Endothelial cell of umbilical vein (primary cell): ENCODE measurements at regions of chr20 and their contacts with region 1.

Region 1: DNA sequence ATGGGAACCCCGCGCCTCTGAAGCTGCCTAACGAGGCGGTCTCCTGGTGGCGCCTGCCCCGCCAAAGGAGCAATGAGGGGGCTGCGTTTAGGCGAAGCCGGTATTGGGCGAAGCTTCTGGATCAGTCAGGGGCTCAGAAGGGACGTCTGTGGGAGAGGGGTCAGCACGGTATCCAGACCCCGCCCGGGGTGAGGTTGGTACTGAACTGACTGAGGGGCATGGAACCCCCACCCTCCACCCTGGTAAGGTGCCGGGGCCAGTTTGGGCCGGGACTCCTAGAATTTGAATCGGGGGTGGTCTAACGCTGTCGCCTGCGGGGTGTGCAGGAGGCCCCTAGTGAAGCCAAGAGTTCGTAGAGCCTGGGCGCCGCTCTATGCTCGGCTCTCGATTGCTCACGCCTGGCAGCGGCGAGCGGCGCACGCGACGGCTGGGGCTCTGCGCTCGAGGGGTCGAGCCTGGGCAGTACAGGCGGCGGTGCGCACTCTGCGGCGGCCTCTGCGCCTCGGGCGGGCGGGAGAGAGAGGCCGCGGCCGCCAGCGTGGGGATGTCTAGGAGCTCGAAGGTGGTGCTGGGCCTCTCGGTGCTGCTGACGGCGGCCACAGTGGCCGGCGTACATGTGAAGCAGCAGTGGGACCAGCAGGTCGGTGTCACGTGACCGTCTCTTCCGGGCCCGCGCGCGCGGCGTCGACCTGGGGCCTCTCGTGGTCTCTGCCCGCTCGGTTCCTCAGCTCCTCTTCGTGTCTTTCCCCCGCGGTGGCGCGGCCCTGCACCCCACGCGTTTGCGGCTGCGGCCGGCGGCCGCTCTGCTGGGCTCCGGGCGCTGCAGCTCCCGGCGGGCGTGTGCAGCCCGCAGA is at the starts of genes KAT14 and PET117:
- DNase-seq: peak; percentile 93
- H3K4me3 ChIP-seq: peak within 1 kb of the TSS; percentile 73 to 86 (median 81)
- H3K27ac ChIP-seq: peak within 1 kb of the TSS; percentile 60
- H3K4me1 ChIP-seq: peaks cover 11% of the 10 kb centered on the region
- H3K27me3 ChIP-seq: peaks cover 3 to 7% of the 10 kb centered on the region in 2 experiments
- CTCF ChIP-seq: no peak
- POLR2A ChIP-seq: peak; percentile 90
- total RNA-seq, gene KAT14: 9.5 and 11.7 TPM in 2 replicates
- total RNA-seq, gene PET117: 11.4 and 12.9 TPM in 2 replicates

Region 2: DNA sequence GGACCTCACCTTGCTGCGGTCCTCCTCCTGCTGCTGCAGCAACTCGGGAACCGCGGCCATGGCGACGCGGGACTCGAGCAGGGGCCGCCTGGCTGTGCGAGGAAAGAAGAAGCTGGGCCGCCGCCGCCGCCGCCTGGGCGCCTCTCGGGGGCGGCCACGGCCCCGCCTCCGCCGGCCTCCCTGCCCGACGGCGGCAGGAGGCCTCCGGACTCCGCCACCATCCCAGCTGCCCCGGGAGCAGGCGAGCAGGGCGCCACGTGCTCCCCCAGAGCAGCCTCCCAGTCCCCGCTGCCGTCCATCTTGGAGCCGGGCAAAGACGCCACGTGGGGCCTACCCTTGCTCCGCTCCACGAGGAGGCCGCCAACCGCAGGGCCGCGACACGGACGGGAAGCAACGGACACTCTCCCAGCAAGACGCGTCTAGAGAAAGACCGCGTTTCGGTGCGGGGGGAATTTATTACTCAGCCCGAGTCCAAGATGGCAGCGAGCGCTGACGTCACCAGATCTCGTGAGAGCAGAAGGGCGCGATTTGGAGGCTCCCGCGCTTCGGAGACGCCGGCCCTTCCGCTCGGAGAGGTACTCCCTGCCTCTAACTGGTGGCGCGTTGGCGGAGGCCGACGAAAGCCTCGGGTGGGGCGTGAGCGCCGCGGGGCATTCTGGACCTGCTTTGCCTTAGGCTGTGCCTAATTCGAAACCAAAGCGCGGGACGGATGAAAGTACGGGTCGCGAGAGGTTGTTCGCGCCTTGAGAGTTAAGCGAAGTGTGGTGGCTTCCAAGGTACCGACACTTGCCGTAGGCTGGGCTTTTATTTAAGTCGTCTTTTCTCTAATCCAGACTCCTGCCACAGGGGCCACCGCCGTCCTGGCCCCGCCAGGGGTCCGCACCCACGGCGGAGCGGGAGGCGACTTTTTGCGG is 169.0 kb before region 1 on chr20 and contains the starts of genes MGME1 and SNX5:
- CTCF ChIA-PET with region 1: no interaction called
- POLR2A ChIA-PET with region 1: no interaction called
- dilution Hi-C with region 1: no loop called
- intact Hi-C with region 1: loop called (anchors 10 kb)
- DNase-seq: peak; percentile 100
- H3K4me3 ChIP-seq: peak within 1 kb of the TSS; percentile 76 to 97 (median 97)
- H3K27ac ChIP-seq: peak within 1 kb of the TSS; percentile 92
- H3K4me1 ChIP-seq: peaks cover 62% of the 10 kb centered on the region
- H3K27me3 ChIP-seq: no peaks in the 10 kb centered on the region
- CTCF ChIP-seq: no peak
- POLR2A ChIP-seq: peak; percentile 92
- total RNA-seq, gene MGME1: 18.0 and 26.2 TPM in 2 replicates
- total RNA-seq, gene SNX5: 109 and 121 TPM in 2 replicates

Region 3: GRCh38 chr20:18224968-18225568 is 87.4 kb after region 1 on chr20:
- CTCF ChIA-PET with region 1: no interaction called
- POLR2A ChIA-PET with region 1: interaction called, 5 read pairs
- dilution Hi-C with region 1: no loop called
- intact Hi-C with region 1: loop called (anchors 5 kb)
- DNase-seq: peak; percentile 83
- H3K4me3 ChIP-seq: no peak overlapping the region
- H3K27ac ChIP-seq: no peak overlapping the region
- H3K4me1 ChIP-seq: peaks cover 14% of the 10 kb centered on the region
- H3K27me3 ChIP-seq: no peaks in the 10 kb centered on the region
- CTCF ChIP-seq: no peak
- POLR2A ChIP-seq: no peak

Region 4: DNA sequence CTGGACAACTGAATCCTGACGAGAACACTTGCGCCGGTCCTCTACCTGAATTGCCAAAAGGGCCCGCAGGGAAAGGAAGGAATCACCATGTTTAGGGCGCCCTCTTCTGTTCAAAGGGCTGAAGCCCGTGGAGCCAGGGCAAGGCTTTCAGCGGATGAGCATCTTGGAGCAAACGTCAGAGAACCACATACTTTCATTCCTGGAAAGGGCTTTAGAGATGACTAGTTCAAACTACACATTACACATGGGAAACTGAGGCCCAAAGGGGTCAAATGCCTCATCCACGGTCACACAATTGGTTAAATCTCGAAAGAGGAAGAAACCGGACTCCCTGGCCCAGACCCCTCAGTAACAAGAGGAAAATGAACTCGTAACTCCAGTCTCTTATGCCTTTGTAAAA is 139.2 kb after region 1 on chr20:
- CTCF ChIA-PET with region 1: interaction called, 3 read pairs
- POLR2A ChIA-PET with region 1: no interaction called
- dilution Hi-C with region 1: no loop called
- intact Hi-C with region 1: loop called (anchors 2 kb)
- DNase-seq: peak; percentile 59
- H3K4me3 ChIP-seq: no peak overlapping the region
- H3K27ac ChIP-seq: no peak overlapping the region
- H3K4me1 ChIP-seq: no peaks in the 10 kb centered on the region
- H3K27me3 ChIP-seq: peaks cover 13 to 17% of the 10 kb centered on the region in 2 experiments
- CTCF ChIP-seq: peak; percentile 86 to 89
- POLR2A ChIP-seq: no peak

Region 5: DNA sequence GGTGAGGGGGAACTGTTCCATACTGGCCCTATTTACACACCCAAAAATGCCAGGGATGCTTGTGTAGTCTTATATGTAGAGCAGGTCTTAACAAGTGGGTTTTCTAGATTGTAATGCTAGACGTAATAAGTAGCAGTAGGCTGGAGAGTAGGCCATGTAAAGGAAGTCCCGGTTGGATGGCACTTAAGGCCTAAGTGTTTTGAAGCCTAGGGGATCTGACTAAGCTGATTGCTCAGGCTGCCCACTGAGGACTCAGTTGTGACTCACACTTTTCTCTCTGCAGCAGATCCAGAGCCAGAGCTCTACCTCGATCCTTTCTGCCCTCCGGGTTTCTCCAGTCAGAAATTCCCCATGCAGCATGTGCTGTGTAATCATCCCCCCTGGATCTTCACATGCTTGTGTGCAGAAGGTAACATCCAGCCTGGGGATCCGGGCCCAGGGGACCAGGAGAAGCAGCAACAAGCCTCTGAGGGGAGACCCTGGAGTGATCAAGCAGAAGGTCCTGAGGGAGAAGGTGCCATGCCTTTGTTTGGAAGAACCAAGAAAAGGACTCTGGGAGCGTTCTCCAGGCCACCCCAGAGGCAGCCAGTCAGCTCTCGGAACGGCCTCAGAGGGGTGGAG is 177.3 kb after region 1 on chr20:
- CTCF ChIA-PET with region 1: no interaction called
- POLR2A ChIA-PET with region 1: no interaction called
- dilution Hi-C with region 1: no loop called
- intact Hi-C with region 1: no loop called
- DNase-seq: no peak
- H3K4me3 ChIP-seq: no peak overlapping the region
- H3K27ac ChIP-seq: no peak overlapping the region
- H3K4me1 ChIP-seq: no peaks in the 10 kb centered on the region
- H3K27me3 ChIP-seq: no peaks in the 10 kb centered on the region
- CTCF ChIP-seq: no peak
- POLR2A ChIP-seq: no peak

Region 6: GRCh38 chr20:18466894-18467730 is 329.5 kb after region 1 on chr20 and contains the starts of genes DZANK1 and POLR3F:
- CTCF ChIA-PET with region 1: no interaction called
- POLR2A ChIA-PET with region 1: no interaction called
- dilution Hi-C with region 1: no loop called
- intact Hi-C with region 1: loop called (anchors 5 kb)
- DNase-seq: peak; percentile 96
- H3K4me3 ChIP-seq: peak within 1 kb of the TSS; percentile 72 to 99 (median 99)
- H3K27ac ChIP-seq: peak within 1 kb of the TSS; percentile 93
- H3K4me1 ChIP-seq: peaks cover 13% of the 10 kb centered on the region
- H3K27me3 ChIP-seq: no peaks in the 10 kb centered on the region
- CTCF ChIP-seq: no peak
- POLR2A ChIP-seq: peak; percentile 34
- total RNA-seq, gene DZANK1: 1.8 and 3.0 TPM in 2 replicates
- total RNA-seq, gene POLR3F: 9.8 and 10.2 TPM in 2 replicates

Region 7: GRCh38 chr20:18587665-18588573 is 450.3 kb after region 1 on chr20 and contains the start of gene DTD1:
- CTCF ChIA-PET with region 1: no interaction called
- POLR2A ChIA-PET with region 1: no interaction called
- dilution Hi-C with region 1: no loop called
- intact Hi-C with region 1: loop called (anchors 5 kb)
- DNase-seq: peak; percentile 85
- H3K4me3 ChIP-seq: peak within 1 kb of the TSS; percentile 65 to 83 (median 82)
- H3K27ac ChIP-seq: peak within 1 kb of the TSS; percentile 6
- H3K4me1 ChIP-seq: peaks cover 9% of the 10 kb centered on the region
- H3K27me3 ChIP-seq: peaks cover 4% of the 10 kb centered on the region in 2 experiments
- CTCF ChIP-seq: peak; percentile 70 to 78
- POLR2A ChIP-seq: peak; percentile 64
- total RNA-seq, gene DTD1: 50.8 and 62.9 TPM in 2 replicates